Activated CD8-positive, alpha-beta T cell treated with anti-CD3 and anti-CD28 coated beads, Interleukin-2, amount 10 ng/mL, durations not matched to agents 7 days and 5 days (primary cell): ENCODE measurements at regions of chr3 and their contacts with region 1.

Region 1: DNA sequence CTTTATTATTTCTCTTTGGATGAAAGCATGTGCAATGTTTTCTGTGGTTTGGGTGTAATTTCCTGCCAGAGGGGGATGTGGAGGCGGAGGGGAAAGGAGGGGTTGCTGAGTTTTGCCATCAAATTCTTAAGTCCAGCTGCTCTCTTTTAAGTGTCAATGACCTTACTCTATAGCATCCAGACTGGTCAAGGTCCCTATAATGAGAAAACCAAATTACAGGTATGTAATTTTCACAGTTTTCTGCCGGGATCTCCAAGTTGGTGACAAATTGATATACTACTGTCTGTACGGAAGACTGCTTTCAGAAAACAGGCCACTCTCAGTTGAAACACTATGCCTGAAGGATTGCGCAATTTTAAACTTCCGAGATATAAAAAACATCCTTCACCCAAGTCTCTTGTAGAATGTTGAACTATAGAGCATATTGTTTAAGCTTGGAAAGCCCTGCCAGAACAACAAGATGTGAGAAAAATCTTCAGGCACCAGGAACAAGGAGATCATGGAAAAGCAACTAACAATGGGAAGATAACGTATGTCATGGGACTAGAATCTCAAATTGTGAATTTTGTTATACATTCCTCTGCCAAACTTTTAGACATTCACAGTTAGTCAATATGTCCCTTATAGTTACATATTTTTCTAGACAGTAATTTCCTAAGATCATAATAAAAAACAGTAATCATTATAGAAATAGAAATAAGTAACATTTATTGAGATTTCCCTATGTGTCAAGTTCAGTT is 300.7 kb upstream of the SATB1 start:
- DNase-seq: peak; percentile 58
- ATAC-seq: peak; percentile 59
- H3K4me3 Mint-ChIP-seq: peak overlapping the region; percentile 66
- H3K27ac Mint-ChIP-seq: peak overlapping the region; percentile 86
- H3K4me1 Mint-ChIP-seq: peaks cover 75% of the 10 kb centered on the region
- H3K27me3 Mint-ChIP-seq: no peaks in the 10 kb centered on the region

Region 2: DNA sequence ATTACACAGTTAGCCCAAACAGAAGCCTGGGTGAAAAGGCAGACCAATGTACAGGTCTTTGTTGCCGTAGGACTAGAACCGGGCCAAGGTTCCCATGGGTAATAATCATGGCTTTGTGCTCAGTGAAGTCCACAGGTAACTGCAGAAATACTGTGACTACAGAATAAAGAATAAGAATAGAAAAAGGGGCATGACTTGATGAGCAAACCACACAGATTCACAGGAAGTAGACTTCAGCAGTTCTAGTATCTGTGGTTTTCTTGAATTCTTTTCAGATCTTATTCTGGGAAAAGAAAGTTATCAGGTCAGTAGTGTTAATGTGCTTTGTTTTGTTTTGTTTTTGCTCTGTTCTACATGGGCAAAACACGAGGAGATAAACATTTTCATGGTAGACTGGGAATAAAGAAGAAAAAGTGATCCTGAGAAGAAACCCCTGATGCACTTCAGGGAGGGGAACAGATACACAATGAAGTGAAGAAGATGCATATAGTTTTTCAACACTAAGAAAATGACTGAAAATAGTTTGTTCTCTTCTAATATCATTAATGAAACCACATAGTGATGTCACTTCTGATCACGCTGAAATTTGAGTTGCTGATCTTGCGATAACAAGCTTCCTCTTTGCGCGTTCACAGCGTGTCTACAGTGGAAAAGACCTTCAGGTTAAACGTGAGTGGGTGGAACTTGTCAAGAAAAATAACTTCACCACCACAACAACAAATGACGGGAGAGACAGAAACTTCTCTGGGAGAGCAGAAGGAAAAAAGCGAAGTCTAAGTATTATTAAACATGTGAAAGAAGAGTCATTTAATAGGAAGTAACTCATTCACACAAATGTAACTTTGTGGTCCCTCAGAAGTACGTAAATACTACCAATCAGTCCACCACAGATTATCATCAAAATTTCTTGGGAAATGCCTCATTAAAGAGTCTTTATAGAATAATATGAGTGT is 15.1 kb after region 1 on chr3:
- CTCF ChIA-PET with region 1: interaction called, 54 read pairs
- POLR2A ChIA-PET with region 1: interaction called, 52 read pairs
- DNase-seq: peak; percentile 72
- ATAC-seq: peak; percentile 72
- H3K4me3 Mint-ChIP-seq: peak overlapping the region; percentile 76
- H3K27ac Mint-ChIP-seq: peak overlapping the region; percentile 92
- H3K4me1 Mint-ChIP-seq: peaks cover 87% of the 10 kb centered on the region
- H3K27me3 Mint-ChIP-seq: no peaks in the 10 kb centered on the region

Region 3: GRCh38 chr3:18747383-18747782 is 21.5 kb after region 1 on chr3:
- CTCF ChIA-PET with region 1: interaction called, 7 read pairs
- POLR2A ChIA-PET with region 1: interaction called, 52 read pairs
- DNase-seq: no peak
- ATAC-seq: no peak
- H3K4me3 Mint-ChIP-seq: no peak overlapping the region
- H3K27ac Mint-ChIP-seq: no peak overlapping the region
- H3K4me1 Mint-ChIP-seq: peaks cover 72% of the 10 kb centered on the region
- H3K27me3 Mint-ChIP-seq: no peaks in the 10 kb centered on the region